MCF 10A (cell line): ENCODE measurements at regions of chr2 and their contacts with region 1.

Region 1: GRCh38 chr2:200765139-200765951 is 46.4 kb upstream of the BZW1 start:
- DNase-seq: peak; percentile 96
- H3K4me3 Mint-ChIP-seq: peak overlapping the region; percentile 11
- H3K27ac Mint-ChIP-seq: peak overlapping the region; percentile 79
- H3K4me1 Mint-ChIP-seq: peaks cover 49% of the 10 kb centered on the region
- H3K27me3 Mint-ChIP-seq: no peaks in the 10 kb centered on the region
- CTCF ChIP-seq: no peak

Region 2: DNA sequence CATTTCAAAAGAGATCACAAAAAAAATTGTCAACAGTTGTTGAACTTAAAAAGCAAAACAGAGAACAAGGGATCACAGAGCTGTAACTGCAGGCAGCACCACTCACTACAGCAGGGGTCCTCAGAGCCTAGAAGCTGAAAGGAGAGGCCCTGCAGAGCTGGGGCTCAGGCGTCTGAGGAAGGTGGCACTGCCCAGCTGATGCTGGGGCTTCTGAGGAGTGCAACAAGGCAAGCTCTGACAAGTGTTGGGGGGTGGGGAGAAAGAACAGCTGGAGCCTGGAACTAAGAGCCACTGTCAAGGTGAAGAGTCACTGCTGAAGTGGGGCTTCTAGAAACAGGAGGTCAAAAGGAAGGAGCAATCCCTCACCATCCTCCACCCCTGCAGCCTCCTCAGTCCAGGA is 960.5 kb before region 1 on chr2:
- CTCF ChIA-PET with region 1: no interaction called
- POLR2A ChIA-PET with region 1: no interaction called
- intact Hi-C with region 1: no loop called
- DNase-seq: no peak
- H3K4me3 Mint-ChIP-seq: no peak overlapping the region
- H3K27ac Mint-ChIP-seq: no peak overlapping the region
- H3K4me1 Mint-ChIP-seq: no peaks in the 10 kb centered on the region
- H3K27me3 Mint-ChIP-seq: peaks cover 9% of the 10 kb centered on the region
- CTCF ChIP-seq: no peak

Region 3: DNA sequence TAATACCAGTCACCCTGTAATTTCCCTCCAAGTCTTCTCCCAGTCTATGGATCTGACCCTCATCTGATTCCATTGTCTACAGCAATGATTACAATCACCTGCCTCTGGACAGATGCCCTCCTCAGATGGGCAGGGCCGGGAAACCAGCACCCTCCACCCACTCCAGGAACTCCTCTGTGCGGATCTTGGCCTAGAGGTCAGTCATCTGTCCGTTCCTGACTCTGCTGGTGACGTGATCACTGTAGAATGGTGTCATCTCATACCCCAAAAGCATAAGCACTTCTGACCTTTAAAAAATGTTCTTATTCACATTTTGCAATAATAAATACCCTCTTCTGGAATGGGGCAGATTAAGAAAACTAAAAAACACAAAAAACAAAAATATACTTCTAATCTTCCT is 16.9 kb after region 1 on chr2:
- CTCF ChIA-PET with region 1: interaction called, 6 read pairs
- POLR2A ChIA-PET with region 1: interaction called, 20 read pairs
- intact Hi-C with region 1: loop called (anchors 2 kb)
- DNase-seq: no peak
- H3K4me3 Mint-ChIP-seq: no peak overlapping the region
- H3K27ac Mint-ChIP-seq: peak overlapping the region; percentile 77
- H3K4me1 Mint-ChIP-seq: peaks cover 17% of the 10 kb centered on the region
- H3K27me3 Mint-ChIP-seq: no peaks in the 10 kb centered on the region
- CTCF ChIP-seq: no peak

Region 4: GRCh38 chr2:200787348-200788120 is 22.2 kb after region 1 on chr2:
- CTCF ChIA-PET with region 1: interaction called, 6 read pairs
- POLR2A ChIA-PET with region 1: interaction called, 20 read pairs
- intact Hi-C with region 1: loop called (anchors 2 kb)
- DNase-seq: peak; percentile 93
- H3K4me3 Mint-ChIP-seq: peak overlapping the region; percentile 10
- H3K27ac Mint-ChIP-seq: peak overlapping the region; percentile 89
- H3K4me1 Mint-ChIP-seq: peaks cover 19% of the 10 kb centered on the region
- H3K27me3 Mint-ChIP-seq: no peaks in the 10 kb centered on the region
- CTCF ChIP-seq: no peak

Region 5: DNA sequence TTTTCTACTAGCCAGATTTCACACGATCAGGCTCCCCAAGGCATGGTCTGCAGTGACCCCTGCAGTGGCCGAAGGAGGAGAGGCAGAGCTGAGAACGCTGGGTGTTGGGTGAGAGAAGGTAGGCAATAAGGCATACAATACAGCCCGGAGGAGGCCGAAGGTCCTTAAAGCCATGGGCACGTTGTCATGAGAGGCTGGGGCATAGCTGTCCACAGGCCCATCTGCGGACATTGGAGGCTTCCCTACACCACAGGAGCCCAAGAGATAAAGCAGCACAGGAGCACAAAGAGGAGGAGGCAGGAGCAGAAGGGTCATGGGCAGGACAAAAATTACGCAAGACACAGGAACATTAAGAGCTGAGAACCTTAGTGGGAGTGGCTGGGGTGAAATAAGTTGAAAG is 29.7 kb after region 1 on chr2:
- CTCF ChIA-PET with region 1: interaction called, 4 read pairs
- POLR2A ChIA-PET with region 1: interaction called, 21 read pairs
- intact Hi-C with region 1: no loop called
- DNase-seq: peak; percentile 77
- H3K4me3 Mint-ChIP-seq: no peak overlapping the region
- H3K27ac Mint-ChIP-seq: no peak overlapping the region
- H3K4me1 Mint-ChIP-seq: peaks cover 22% of the 10 kb centered on the region
- H3K27me3 Mint-ChIP-seq: no peaks in the 10 kb centered on the region
- CTCF ChIP-seq: no peak